PC-3 (cell line): ENCODE measurements at regions of chr13 and their contacts with region 1.

Region 1: GRCh38 chr13:23673354-23673753 is 103.1 kb downstream of the TNFRSF19 start:
- DNase-seq: peak; percentile 82
- ATAC-seq: peak; percentile 60
- H3K4me3 ChIP-seq: no peak overlapping the region
- H3K27ac ChIP-seq: peak overlapping the region; percentile 85
- H3K4me1 ChIP-seq: peaks cover 49% of the 10 kb centered on the region
- H3K27me3 ChIP-seq: no peaks in the 10 kb centered on the region
- CTCF ChIP-seq: no peak

Region 2: DNA sequence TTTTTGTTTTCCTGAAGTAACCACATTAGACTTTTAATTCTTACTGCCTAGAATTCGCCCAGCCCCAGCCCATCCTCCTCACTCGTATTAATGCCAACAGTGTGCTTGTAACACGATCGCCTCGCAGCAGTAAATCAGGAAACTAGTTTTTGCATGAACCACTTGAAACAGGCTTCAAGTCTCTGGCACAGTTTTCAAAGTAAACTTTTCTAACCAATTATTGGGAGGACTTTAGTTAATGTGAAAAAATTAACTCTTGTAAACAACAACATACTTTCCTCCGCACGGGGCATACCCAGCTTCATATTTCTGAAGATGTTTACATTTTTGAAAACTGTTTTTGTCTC is 64.0 kb before region 1 on chr13:
- CTCF ChIA-PET with region 1: no interaction called
- POLR2A ChIA-PET with region 1: no interaction called
- intact Hi-C with region 1: loop called (anchors 10 kb)
- DNase-seq: peak; percentile 55
- ATAC-seq: peak; percentile 87
- H3K4me3 ChIP-seq: peak overlapping the region; percentile 33; the same call in 1 of the 2 replicates
- H3K27ac ChIP-seq: no peak overlapping the region; the same call in 1 of the 2 replicates
- H3K4me1 ChIP-seq: peaks cover 26% of the 10 kb centered on the region
- H3K27me3 ChIP-seq: no peaks in the 10 kb centered on the region
- CTCF ChIP-seq: no peak

Region 3: GRCh38 chr13:23656637-23657371 is 16.6 kb before region 1 on chr13:
- CTCF ChIA-PET with region 1: no interaction called
- POLR2A ChIA-PET with region 1: no interaction called
- intact Hi-C with region 1: no loop called
- DNase-seq: no peak
- ATAC-seq: no peak
- H3K4me3 ChIP-seq: no peak overlapping the region
- H3K27ac ChIP-seq: no peak overlapping the region
- H3K4me1 ChIP-seq: peaks cover 3% of the 10 kb centered on the region; the same call in 1 of the 2 replicates
- H3K27me3 ChIP-seq: no peaks in the 10 kb centered on the region
- CTCF ChIP-seq: no peak

Region 4: DNA sequence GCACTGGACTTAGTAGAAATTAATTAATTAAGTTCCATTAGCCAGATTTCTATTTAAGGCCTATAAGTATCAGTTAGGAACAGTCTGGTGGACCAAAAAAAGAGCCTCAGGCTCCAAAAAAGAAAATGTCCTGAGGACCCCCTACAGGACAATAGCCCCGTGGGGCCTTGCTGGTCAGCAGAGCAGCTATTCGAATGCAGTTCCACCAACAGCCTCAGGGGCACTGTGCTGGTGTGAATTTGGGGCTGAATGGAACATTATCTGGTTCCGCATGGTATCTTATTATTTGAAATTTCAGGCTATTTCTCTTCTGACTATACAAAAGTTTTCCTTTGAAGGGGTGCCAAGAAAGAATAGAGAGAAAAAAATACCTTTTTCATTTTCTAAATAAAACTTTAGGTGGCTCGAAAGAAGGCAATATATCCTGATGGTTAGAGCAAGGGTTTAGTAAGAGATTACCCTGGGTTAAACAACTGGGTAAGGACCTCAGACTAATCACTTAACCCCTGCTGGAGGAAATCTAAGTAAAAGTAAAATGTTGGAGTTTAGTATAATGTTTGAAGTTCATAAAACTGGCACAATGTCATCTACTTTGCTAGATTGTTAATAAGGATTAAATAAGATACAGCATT is 68.6 kb after region 1 on chr13:
- CTCF ChIA-PET with region 1: no interaction called
- POLR2A ChIA-PET with region 1: no interaction called
- intact Hi-C with region 1: no loop called
- DNase-seq: peak; percentile 39
- ATAC-seq: peak; percentile 32; the same call in 1 of the 2 replicates
- H3K4me3 ChIP-seq: no peak overlapping the region
- H3K27ac ChIP-seq: no peak overlapping the region
- H3K4me1 ChIP-seq: peaks cover 22% of the 10 kb centered on the region
- H3K27me3 ChIP-seq: no peaks in the 10 kb centered on the region
- CTCF ChIP-seq: peak; percentile 72